Gastrocnemius medialis (tissue), 4 donors: ENCODE measurements at regions of chr3 and their contacts with region 1.

Region 1: DNA sequence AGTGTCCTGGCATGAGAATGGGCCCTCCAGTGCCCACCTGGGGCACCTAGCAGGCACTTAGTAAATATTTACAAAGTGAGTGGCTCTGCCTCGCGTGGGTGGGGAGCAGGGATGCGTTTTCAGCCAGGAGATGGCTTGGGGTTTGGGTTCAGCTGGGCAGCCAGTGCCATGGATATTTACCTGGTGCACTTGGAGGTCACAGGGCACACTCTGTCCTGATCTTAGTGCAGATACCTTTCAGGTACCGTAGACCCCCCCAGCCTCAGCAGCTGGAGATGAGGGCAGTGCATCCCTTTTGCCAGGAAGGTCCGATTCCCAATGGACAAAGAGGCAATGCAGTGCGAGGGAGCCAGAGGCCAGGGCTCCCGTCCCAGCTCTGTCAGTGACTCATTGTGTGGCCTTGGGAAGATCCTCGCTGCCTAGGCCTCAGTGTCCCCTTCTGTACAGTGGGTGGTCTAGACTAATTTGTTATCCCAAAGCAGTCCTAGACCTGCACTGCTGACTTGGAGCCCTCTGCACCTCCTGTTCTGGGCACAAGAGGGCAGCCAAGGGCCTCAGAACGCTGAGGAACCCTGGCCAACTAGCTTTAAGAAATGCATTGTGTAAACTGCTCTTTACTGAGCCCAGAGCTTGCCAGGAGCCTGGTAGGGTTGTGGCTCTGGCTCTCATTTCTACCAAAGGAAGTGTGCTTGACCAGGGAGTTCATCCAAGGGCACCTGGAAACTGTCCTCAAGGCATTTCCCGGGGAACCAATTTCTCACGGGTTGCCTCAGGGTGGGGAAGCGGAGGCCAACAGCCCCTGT is 16.0 kb downstream of the HDAC11 start:
- DNase-seq: peak; percentile 76 to 82
- ATAC-seq: peak; percentile 97
- H3K4me3 ChIP-seq: no peak overlapping the region
- H3K27ac ChIP-seq: peak overlapping the region in 2 of 4 donors; percentile 32 to 33
- H3K4me1 ChIP-seq: peaks cover 14 to 18% of the 10 kb centered on the region in 2 donors
- H3K27me3 ChIP-seq: no peaks in the 10 kb centered on the region
- CTCF ChIP-seq: peak; percentile 89 to 96 (median 94)
- POLR2A ChIP-seq: no peak

Region 2: DNA sequence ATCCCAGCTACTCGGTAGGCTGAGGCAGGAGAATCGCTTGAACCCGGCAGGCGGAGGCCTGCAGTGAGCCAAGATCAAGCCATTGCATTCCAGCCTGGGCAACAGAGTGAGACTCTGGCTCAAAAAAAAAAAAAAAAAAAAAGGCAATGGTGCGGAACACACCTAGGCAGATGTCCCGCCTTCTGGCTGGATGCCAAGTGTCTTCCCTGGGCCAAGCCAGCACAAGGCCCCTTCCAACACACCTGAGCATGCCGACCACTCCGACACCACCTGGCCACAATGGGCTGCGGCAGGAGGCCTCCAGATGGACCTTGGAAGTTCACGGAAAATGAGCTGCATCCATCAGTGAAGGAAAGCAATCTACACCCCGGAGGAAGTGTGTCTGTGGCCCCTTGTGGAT is 95.0 kb before region 1 on chr3:
- in situ Hi-C with region 1: no loop called
- intact Hi-C with region 1: no loop called
- DNase-seq: no peak
- ATAC-seq: no peak
- H3K4me3 ChIP-seq: no peak overlapping the region
- H3K27ac ChIP-seq: no peak overlapping the region
- H3K4me1 ChIP-seq: no peaks in the 10 kb centered on the region
- H3K27me3 ChIP-seq: no peaks in the 10 kb centered on the region
- CTCF ChIP-seq: no peak
- POLR2A ChIP-seq: no peak

Region 3: DNA sequence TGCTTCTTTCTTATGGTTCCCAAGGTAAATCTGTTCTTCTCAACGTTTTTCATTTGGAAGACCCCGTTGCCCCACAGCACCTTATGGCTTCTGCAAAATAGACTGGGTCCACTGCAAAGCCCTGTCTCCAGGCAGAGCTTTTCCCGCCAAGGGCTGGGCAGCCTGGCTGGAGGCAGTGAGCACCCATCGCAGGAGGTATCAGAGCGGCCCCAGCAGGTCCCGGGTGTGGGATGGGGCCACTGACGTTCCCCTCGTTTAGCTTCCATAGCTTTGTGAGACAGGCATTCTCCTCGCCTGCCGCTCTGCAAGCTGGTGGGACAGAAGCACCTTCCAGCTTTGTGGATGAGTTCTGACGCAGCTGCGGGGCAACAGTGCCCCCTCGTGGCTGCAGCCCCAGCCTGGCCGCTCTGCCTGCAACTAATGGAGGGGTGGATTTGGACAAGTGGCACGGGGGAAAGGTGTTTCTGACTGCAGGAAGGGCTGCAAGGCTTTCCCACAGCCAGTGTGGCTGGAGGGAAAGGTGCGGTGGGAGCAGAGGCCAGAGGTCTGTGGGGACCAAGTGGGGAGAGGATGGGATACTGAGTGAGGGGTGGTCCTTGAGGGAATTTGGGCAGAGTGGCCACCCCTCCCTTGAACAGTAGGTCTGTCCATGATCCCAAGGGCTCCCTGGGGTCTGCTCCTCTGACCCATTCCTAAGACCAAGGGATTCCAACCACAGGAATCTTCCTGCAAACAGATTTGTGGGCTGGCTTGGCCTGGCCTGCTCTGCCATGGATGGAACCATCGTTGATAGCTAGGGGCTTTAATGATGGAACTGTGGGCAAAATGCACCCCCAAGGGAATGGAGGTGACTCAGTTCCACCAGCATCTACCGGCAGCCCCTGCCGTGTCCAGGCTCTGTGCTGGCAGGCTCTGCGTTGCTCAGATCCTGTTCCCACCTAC is 152.2 kb after region 1 on chr3:
- in situ Hi-C with region 1: loop called (anchors 5 kb)
- intact Hi-C with region 1: loop called (anchors 1 kb)
- DNase-seq: peak; percentile 56 to 69
- ATAC-seq: peak; percentile 76 to 81
- H3K4me3 ChIP-seq: no peak overlapping the region
- H3K27ac ChIP-seq: no peak overlapping the region
- H3K4me1 ChIP-seq: peaks cover 7 to 8% of the 10 kb centered on the region in 2 donors
- H3K27me3 ChIP-seq: peaks cover 0 to 8% (median 0%) of the 10 kb centered on the region in 3 donors
- CTCF ChIP-seq: peak; percentile 91 to 99 (median 95)
- POLR2A ChIP-seq: no peak